ENCODE measurements at regions of chr12 and their contacts with region 1.

Region 1: DNA sequence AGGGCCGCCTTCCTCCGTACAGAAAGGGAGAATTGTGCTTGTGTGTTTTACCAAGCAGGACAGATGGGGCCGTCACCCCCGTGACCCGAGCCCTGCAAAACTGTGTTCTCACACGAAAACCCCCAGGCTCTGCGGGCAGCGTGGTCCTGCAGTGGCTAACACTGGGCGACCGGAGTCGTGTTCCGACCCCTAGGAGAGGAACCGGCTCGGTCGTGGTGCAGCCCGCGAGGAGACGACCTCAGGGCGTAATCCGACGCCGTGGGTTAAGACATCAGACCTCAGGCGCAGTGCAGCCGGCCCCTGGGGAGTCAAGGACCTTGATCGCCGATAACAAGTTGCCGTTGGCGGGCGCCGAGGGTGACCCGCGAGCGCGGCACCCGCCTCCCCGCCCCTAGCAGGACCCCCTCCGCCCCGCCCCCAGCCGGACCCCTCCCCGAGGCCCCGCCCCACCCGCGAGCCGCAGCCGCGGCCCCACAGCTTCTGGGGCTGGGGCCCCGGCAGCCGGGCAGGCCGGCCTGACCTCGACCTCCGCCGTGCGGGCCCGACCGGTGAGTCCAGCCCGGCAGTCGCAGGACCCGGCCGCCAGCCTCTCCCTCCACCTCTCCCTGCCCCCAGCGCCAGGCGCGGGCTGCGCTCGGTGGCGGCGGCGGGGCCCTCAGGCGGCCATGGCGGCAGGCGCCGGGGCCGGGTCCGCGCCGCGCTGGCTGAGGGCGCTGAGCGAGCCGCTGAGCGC is at the start of gene CHPT1:
- DNase-seq: peak; percentile 76 to 94
- H3K4me3 ChIP-seq: peak within 1 kb of the TSS; percentile 73
- H3K4me1 ChIP-seq: peaks cover 32% of the 10 kb centered on the region
- H3K27me3 ChIP-seq: no peaks in the 10 kb centered on the region

Region 2: DNA sequence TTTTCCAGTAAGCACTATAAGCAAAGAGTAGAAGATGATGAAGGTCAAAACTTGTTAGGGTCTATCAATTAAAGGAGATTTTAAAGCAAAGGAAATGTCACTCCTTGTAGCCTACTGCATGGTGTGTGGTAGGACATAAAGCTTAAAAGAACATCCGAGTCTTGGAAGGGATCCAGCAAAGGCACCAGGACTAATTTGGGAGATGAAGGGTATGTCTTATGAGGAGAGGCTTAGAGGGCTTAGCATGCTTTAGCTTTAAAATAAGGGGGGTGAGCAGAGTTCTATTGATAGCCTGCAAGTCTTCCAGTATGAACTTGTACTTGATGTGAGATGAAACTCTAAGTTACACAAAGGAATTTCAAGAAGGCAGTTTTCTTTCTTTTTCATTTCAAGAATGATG is 114.4 kb before region 1 on chr12:
- in situ Hi-C with region 1: no loop called
- DNase-seq: peak; percentile 27 to 39
- H3K4me3 ChIP-seq: no peak overlapping the region
- H3K4me1 ChIP-seq: no peaks in the 10 kb centered on the region
- H3K27me3 ChIP-seq: no peaks in the 10 kb centered on the region

Region 3: DNA sequence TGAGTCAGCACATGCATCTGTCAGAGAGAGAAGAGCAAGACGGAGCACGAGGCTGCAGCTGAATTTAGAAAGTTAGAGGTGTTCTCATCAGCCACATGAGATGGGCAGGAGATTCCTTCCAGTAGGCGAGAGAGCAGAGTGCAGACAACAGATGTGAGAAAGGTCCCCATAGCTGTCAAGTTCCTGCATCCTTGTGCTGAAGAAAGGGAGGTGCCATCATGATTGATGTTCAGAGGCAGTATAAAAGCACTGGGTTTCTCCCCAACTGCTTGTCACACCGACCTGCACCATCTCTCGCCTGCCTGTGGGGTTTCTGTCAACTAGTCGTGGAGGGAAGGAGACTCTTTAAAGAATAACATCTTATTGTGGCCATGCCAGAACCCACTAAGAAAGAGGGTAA is 102.7 kb before region 1 on chr12 and contains the start of gene MYBPC1:
- in situ Hi-C with region 1: no loop called
- DNase-seq: peak in 1 of 2 experiments; percentile 20
- H3K4me3 ChIP-seq: no peak within 1 kb of the TSS
- H3K4me1 ChIP-seq: peaks cover 12% of the 10 kb centered on the region
- H3K27me3 ChIP-seq: no peaks in the 10 kb centered on the region

Region 4: DNA sequence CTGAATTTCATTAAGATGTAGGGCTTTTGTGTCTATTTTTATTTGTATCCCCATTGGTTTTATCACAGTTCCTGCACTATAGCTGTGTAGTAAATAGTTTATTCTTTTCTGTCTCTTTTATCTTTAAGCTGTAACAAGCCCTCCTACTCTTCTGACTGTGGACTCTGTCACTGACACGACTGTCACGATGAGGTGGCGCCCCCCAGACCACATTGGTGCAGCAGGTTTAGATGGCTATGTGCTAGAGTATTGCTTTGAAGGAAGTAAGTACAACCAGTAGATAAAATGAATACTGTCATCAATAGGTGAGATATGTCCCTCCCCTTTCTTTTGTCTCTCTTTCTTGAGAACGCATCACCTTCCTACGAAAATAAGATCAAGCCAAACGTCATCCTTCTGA is 34.1 kb before region 1 on chr12:
- in situ Hi-C with region 1: loop called (anchors 5 kb)
- DNase-seq: no peak
- H3K4me3 ChIP-seq: peak overlapping the region; percentile 8
- H3K4me1 ChIP-seq: peaks cover 46% of the 10 kb centered on the region
- H3K27me3 ChIP-seq: no peaks in the 10 kb centered on the region